Activated CD8-positive, alpha-beta memory T cell treated with anti-CD3 and anti-CD28 coated beads, Interleukin-2, amount 10 ng/mL, durations not matched to agents 7 days and 5 days (primary cell): ENCODE measurements at regions of chr10 and their contacts with region 1.

Region 1: DNA sequence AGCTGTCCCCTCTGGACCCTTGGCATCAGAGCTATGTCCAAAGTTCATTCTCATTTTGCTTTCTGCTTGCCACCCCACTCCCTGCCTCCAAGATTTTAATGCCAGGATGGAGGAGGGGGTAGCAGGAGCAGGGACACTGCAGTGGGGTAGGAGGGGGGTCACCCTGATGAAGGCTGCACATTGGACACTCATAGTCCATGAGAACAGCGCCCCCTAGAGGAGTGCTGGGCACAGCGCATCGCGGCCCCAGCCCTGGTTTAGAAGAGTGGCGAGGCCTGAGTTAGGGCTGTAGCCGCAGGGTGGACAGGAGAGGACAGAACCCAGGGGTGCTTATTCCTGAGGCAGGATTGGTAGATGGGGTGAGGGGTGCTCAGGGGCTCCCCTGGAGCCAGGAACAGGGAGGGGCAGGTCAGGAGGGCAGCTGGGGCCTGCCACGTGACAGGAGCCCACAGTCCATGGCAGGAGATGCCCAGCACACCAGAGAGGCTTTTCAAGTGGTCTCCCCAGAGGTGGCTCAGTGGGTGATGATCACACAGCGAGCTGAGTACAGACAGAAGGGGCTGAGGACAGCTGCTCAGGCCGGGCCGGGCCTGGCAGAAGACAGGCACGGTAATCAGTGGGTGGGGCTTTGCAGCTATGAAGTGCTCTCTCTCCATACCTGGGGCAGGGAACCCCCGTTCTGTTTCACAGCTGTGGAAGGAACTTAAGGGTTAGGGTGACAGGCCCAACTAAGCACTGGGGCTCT is 71.4 kb downstream of the NEURL1 start:
- DNase-seq: peak; percentile 65
- ATAC-seq: peak; percentile 70
- H3K4me3 Mint-ChIP-seq: no peak overlapping the region
- H3K27ac Mint-ChIP-seq: no peak overlapping the region
- H3K4me1 Mint-ChIP-seq: no peaks in the 10 kb centered on the region
- H3K27me3 Mint-ChIP-seq: peaks cover 19% of the 10 kb centered on the region

Region 2: GRCh38 chr10:103554488-103555324 is 10.2 kb before region 1 on chr10:
- CTCF ChIA-PET with region 1: interaction called, 11 read pairs
- DNase-seq: no peak
- ATAC-seq: peak; percentile 57
- H3K4me3 Mint-ChIP-seq: peak overlapping the region; percentile 39
- H3K27ac Mint-ChIP-seq: no peak overlapping the region
- H3K4me1 Mint-ChIP-seq: peaks cover 24% of the 10 kb centered on the region
- H3K27me3 Mint-ChIP-seq: peaks cover 34% of the 10 kb centered on the region

Region 3: DNA sequence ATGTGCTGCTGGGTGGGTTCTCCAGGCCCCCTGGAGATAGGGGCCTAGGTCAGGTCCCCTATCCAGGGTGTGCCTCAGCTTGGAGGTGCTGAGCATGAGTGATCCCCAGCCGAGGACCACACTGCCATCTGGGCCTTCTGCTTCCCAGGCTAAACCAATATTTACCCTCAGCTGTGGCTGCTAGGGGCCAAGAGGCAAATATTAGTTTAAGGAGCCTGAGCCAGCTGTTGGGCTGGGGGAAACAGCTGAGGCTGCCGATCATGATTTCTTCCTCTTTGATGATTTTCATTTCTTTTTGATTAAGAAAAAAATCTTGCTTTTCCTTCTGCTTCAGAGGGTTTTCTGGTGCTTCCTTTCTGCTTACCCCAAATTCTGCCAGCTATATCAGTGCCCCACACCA is 11.9 kb after region 1 on chr10:
- CTCF ChIA-PET with region 1: interaction called, 10 read pairs
- DNase-seq: no peak
- ATAC-seq: no peak
- H3K4me3 Mint-ChIP-seq: no peak overlapping the region
- H3K27ac Mint-ChIP-seq: no peak overlapping the region
- H3K4me1 Mint-ChIP-seq: peaks cover 2% of the 10 kb centered on the region
- H3K27me3 Mint-ChIP-seq: peaks cover 7% of the 10 kb centered on the region